Left cardiac atrium (tissue), 4 donors: ENCODE measurements at regions of chr5 and their contacts with region 1.

Region 1: GRCh38 chr5:129904102-129904666 is at the start of gene CHSY3:
- DNase-seq: peak; percentile 89
- ATAC-seq: peak; percentile 95 to 97
- total RNA-seq, gene CHSY3: 1.9 to 3.1 TPM

Region 2: GRCh38 chr5:129958581-129958980 is 54.4 kb after region 1 on chr5:
- intact Hi-C with region 1: no loop called
- DNase-seq: no peak
- ATAC-seq: no peak

Region 3: DNA sequence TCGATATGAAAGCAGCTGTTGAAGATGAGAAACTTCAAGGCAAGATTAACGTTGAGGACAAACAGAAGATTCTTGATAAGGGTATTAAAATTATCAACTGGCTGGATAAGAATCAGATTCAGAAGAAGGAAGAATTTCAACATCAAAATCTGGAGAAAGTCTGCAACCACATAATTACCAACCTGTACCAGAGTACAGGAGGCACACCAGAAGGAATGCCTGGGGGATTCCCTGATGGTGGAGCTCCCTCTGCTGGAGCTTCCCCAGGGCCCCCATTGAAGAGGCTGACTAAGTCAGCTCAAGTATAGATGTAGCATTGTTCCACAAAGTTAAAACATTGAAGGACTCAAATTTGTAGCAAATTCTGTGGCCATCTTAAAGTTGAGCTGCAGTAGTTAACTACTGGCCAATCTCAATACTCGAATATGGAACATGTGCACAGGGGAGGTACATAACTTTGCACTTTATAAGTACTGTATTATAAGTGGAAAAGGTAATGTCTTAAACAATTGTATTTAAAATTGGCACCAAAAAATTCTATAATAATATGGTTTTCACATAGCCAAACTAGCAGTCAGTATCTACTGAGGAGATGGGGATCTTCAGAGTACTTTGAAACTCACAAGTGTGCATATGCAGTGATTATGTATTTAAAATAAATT is 237.6 kb after region 1 on chr5:
- intact Hi-C with region 1: loop called (anchors 5 kb)
- DNase-seq: peak; percentile 22
- ATAC-seq: peak; percentile 44 to 76

Region 4: GRCh38 chr5:131109540-131110255 is 1205.5 kb after region 1 on chr5:
- intact Hi-C with region 1: loop called in 1 of 2 experiments (anchors 1 kb)
- DNase-seq: no peak
- ATAC-seq: peak; percentile 64 to 76